Caco-2 (cell line): ENCODE measurements at regions of chr3 and their contacts with region 1.

Region 1: DNA sequence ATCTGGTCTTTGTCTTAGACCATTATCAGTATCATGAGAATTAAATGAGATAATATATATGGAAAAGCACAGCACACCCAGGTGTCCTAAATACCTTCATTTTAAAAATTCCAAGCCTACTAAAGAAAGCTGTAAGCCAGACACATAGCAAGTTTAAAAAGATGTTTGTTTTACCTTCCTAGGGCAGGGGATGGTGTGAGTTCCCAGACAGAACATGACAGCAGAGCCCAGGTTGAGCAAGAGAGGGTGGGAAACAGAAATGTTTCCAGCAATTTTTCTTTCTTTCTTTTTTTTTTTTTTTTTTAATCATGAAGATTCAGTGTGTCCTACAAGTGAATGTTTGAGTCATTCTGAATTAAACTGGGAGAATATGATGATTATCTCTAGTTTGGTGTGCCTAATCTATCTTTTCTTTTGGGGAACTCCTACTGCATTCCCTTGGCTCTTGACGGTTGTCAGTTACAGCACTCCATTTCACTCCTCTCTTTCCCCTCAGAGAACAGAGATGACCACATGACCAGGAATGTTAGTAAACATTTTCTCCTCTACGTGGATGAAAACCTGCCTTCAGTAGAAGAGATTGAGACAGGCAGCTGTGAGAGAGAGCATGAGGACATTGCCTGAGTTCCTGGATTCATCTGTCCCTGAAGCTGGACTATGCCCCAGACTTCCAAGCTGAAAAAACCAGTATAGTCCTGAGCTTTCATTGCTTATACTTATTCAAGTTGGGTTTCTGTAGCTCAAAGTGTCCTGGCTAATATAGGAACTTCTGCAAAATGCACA is 54.5 kb upstream of the ARL14 start:
- DNase-seq: no peak
- H3K4me3 ChIP-seq: no peak overlapping the region
- H3K4me3 Mint-ChIP-seq: no peak overlapping the region
- H3K27ac Mint-ChIP-seq: no peak overlapping the region
- H3K4me1 ChIP-seq: peaks cover 19% of the 10 kb centered on the region
- H3K4me1 Mint-ChIP-seq: no peaks in the 10 kb centered on the region
- H3K27me3 ChIP-seq: no peaks in the 10 kb centered on the region
- H3K27me3 Mint-ChIP-seq: no peaks in the 10 kb centered on the region
- CTCF ChIP-seq: no peak

Region 2: GRCh38 chr3:160544844-160545503 is 77.5 kb before region 1 on chr3:
- CTCF ChIA-PET with region 1: no interaction called
- POLR2A ChIA-PET with region 1: no interaction called
- intact Hi-C with region 1: no loop called
- DNase-seq: no peak
- H3K4me3 ChIP-seq: no peak overlapping the region
- H3K4me3 Mint-ChIP-seq: no peak overlapping the region
- H3K27ac Mint-ChIP-seq: no peak overlapping the region
- H3K4me1 ChIP-seq: peaks cover 5% of the 10 kb centered on the region; the same call in 1 of the 2 replicates
- H3K4me1 Mint-ChIP-seq: peaks cover 10% of the 10 kb centered on the region
- H3K27me3 ChIP-seq: no peaks in the 10 kb centered on the region
- H3K27me3 Mint-ChIP-seq: no peaks in the 10 kb centered on the region
- CTCF ChIP-seq: no peak

Region 3: DNA sequence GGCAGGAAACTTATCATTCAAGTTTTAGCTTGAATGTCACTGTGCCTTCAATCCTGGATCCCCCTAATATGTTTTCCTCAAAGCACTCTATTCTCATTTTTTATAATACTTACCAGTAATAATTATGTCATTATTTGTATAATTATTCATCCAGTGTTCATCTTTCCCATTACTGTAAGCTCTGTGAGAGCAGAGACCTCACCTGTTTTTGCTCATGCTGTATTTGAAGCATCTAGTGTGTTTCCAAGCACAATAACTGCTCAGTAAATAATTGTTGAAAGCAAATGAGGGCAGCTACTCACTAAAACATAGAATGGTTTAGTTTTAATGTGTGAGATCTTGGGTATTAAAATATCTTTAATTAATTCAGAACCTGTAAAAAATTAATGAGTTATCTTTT is 20.2 kb before region 1 on chr3:
- CTCF ChIA-PET with region 1: no interaction called
- POLR2A ChIA-PET with region 1: no interaction called
- intact Hi-C with region 1: loop called (anchors 1 kb)
- DNase-seq: no peak
- H3K4me3 ChIP-seq: no peak overlapping the region
- H3K4me3 Mint-ChIP-seq: no peak overlapping the region
- H3K27ac Mint-ChIP-seq: no peak overlapping the region
- H3K4me1 ChIP-seq: no peaks in the 10 kb centered on the region
- H3K4me1 Mint-ChIP-seq: no peaks in the 10 kb centered on the region
- H3K27me3 ChIP-seq: no peaks in the 10 kb centered on the region
- H3K27me3 Mint-ChIP-seq: no peaks in the 10 kb centered on the region
- CTCF ChIP-seq: no peak